ENCODE measurements at regions of chr21 and their contacts with region 1.

Region 1: GRCh38 chr21:29024474-29025327 is at the start of gene USP16:
- DNase-seq: peak; percentile 94
- ATAC-seq: peak; percentile 95
- H3K4me3 Mint-ChIP-seq: peak within 1 kb of the TSS; percentile 90
- H3K27ac Mint-ChIP-seq: peak within 1 kb of the TSS; percentile 96
- H3K4me1 Mint-ChIP-seq: peaks cover 46% of the 10 kb centered on the region
- H3K27me3 Mint-ChIP-seq: no peaks in the 10 kb centered on the region
- total RNA-seq, gene USP16: 41.1 to 41.7 TPM

Region 2: GRCh38 chr21:28832013-28832714 is 192.5 kb before region 1 on chr21:
- CTCF ChIA-PET with region 1: no interaction called
- POLR2A ChIA-PET with region 1: no interaction called
- intact Hi-C with region 1: loop called in 1 of 2 experiments (anchors 5 kb)
- DNase-seq: no peak
- ATAC-seq: peak; percentile 93
- H3K4me3 Mint-ChIP-seq: no peak overlapping the region
- H3K27ac Mint-ChIP-seq: peak overlapping the region; percentile 71
- H3K4me1 Mint-ChIP-seq: peaks cover 65% of the 10 kb centered on the region
- H3K27me3 Mint-ChIP-seq: no peaks in the 10 kb centered on the region

Region 3: GRCh38 chr21:28884976-28885852 is 139.5 kb before region 1 on chr21:
- CTCF ChIA-PET with region 1: no interaction called
- POLR2A ChIA-PET with region 1: no interaction called
- intact Hi-C with region 1: loop called (anchors 1 to 10 kb)
- DNase-seq: peak; percentile 95
- ATAC-seq: peak; percentile 96
- H3K4me3 Mint-ChIP-seq: peak overlapping the region; percentile 86
- H3K27ac Mint-ChIP-seq: peak overlapping the region; percentile 99
- H3K4me1 Mint-ChIP-seq: peaks cover 16% of the 10 kb centered on the region
- H3K27me3 Mint-ChIP-seq: no peaks in the 10 kb centered on the region

Region 4: DNA sequence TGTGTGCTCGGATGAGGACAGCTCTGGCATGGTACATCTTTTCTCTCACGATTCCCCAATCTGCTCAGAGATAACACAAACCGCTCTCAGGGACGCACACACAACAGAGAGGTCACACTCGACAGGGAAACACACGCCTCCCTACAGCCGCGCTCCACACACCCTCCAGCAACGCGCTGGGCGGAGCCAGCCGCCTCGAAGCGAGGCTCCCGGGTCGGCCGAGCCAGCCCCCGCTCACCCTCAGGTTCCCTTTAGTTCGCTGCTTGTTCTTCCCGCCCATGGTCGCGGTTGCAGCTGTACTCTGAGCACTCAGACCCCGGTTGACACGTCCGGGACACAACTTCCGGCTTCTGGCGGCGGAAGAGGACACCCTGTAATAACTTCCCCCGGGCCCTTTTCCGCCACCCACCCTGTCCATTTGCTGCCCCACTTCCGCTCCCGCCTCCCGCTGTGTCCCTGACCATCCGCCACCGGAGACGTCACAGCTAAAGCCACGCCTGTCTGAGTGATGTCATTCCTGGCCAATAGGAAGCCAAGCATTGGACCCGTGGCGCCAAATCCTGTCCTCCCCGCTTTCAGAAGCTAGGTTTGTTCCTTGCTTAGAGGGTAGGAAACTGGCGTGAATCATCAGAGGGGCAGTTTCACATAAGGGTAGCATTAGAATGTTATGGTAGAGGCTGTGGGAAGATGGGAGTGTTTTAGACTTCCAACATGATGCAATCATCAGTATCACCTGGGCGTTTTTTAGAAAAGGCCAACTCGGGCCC is 32.0 kb before region 1 on chr21 and contains the start of gene LTN1:
- CTCF ChIA-PET with region 1: interaction called, 13 read pairs
- POLR2A ChIA-PET with region 1: interaction called, 18 read pairs
- intact Hi-C with region 1: loop called (anchors 1 kb)
- DNase-seq: peak; percentile 100
- ATAC-seq: peak; percentile 92
- H3K4me3 Mint-ChIP-seq: peak within 1 kb of the TSS; percentile 83
- H3K27ac Mint-ChIP-seq: peak within 1 kb of the TSS; percentile 90
- H3K4me1 Mint-ChIP-seq: peaks cover 44% of the 10 kb centered on the region
- H3K27me3 Mint-ChIP-seq: no peaks in the 10 kb centered on the region
- total RNA-seq, gene LTN1: 26.6 to 29.4 TPM

Region 5: GRCh38 chr21:29002442-29003144 is 22.1 kb before region 1 on chr21:
- CTCF ChIA-PET with region 1: interaction called, 7 read pairs
- POLR2A ChIA-PET with region 1: interaction called, 32 read pairs
- intact Hi-C with region 1: loop called (anchors 1 kb)
- DNase-seq: peak; percentile 97
- ATAC-seq: peak; percentile 100
- H3K4me3 Mint-ChIP-seq: peak overlapping the region; percentile 88
- H3K27ac Mint-ChIP-seq: peak overlapping the region; percentile 97
- H3K4me1 Mint-ChIP-seq: peaks cover 1% of the 10 kb centered on the region
- H3K27me3 Mint-ChIP-seq: no peaks in the 10 kb centered on the region

Region 6: DNA sequence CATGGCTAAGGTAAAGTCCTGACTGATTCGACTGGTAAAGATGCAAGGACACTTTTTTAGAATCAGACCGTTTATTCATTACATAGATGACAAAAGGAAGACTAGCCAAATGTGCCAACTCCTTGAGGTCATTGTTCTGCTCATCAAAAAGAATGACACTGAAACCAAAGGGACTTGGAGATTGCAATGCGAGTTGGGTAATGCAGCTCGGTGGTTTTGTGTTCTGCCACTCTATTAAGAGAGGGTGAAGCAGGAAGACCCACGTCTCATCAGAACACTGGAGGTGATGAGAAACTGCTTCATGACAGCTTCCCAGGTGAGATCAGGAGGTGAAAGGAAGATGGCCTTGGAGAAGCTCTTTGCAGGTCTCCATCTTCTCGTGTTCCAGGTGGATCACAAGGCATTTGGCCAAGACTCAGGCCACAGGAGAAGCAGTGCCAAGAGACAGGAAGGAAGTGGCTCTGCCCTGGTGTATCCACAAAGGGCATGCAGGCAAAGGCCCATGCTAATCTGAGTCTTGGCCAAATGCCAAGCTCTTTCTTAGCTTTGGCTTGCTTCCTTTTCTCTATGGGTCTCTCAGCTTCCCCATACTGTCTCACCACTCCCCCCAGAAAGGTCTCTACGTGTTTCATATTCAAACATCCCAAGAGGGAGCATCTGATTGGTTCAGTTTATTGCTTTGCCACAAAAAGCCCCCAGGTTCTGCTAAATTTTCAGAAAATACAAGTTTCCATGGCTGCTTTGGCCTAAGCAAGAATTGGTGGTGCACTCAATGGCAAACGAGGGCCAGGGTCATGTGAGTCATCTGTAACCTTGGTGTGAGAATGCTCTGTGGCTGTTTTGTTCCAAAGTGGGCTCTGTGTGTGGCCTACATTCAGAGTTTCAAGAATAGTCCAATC is 54.4 kb after region 1 on chr21:
- CTCF ChIA-PET with region 1: interaction called, 4 read pairs
- POLR2A ChIA-PET with region 1: interaction called, 10 read pairs
- intact Hi-C with region 1: loop called in 1 of 2 experiments (anchors 1 kb)
- DNase-seq: peak; percentile 61
- ATAC-seq: peak; percentile 62
- H3K4me3 Mint-ChIP-seq: peak overlapping the region; percentile 80
- H3K27ac Mint-ChIP-seq: peak overlapping the region; percentile 85
- H3K4me1 Mint-ChIP-seq: peaks cover 59% of the 10 kb centered on the region
- H3K27me3 Mint-ChIP-seq: no peaks in the 10 kb centered on the region

Region 7: GRCh38 chr21:29748391-29749167 is 723.9 kb after region 1 on chr21:
- CTCF ChIA-PET with region 1: no interaction called
- POLR2A ChIA-PET with region 1: no interaction called
- intact Hi-C with region 1: no loop called
- DNase-seq: no peak
- ATAC-seq: no peak
- H3K4me3 Mint-ChIP-seq: no peak overlapping the region
- H3K27ac Mint-ChIP-seq: no peak overlapping the region
- H3K4me1 Mint-ChIP-seq: no peaks in the 10 kb centered on the region
- H3K27me3 Mint-ChIP-seq: peaks cover 2% of the 10 kb centered on the region